ENCODE measurements at regions of chr5 and their contacts with region 1.

Region 1: DNA sequence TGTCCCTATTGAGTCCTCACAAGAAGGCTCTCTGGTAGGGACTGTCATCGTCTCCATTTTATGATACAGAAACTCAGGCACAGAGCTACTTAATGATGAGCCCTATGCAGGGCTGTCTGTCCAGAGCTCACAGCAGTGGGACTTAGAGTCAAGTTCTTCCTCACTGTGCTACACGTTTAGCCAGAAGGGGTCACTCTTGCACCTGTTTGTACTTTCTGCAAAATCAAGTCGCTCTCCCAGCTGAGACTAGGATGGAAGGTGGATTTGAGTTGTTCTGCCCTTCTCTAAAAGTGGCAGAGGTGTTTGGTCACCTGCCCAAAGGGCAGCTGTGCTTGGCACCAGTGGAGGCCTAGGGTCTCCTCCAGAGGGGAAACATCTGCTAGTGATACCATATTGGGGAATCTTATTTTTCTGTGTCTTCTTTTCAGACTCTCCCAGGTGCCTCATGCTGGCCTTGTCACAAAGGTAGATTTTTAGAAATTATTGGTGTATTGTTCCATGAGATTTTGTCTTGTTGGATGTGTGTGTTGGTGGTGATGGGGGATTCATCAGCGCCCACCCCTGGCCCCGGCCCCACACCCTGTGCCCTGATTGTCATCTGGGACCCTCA is 104.2 kb downstream of the PPARGC1B start:
- DNase-seq: no peak
- ATAC-seq: peak; percentile 25 to 33

Region 2: GRCh38 chr5:149938791-149939358 is 104.5 kb after region 1 on chr5:
- intact Hi-C with region 1: no loop called
- DNase-seq: no peak
- ATAC-seq: peak in 1 of 2 donors; percentile 18

Region 3: DNA sequence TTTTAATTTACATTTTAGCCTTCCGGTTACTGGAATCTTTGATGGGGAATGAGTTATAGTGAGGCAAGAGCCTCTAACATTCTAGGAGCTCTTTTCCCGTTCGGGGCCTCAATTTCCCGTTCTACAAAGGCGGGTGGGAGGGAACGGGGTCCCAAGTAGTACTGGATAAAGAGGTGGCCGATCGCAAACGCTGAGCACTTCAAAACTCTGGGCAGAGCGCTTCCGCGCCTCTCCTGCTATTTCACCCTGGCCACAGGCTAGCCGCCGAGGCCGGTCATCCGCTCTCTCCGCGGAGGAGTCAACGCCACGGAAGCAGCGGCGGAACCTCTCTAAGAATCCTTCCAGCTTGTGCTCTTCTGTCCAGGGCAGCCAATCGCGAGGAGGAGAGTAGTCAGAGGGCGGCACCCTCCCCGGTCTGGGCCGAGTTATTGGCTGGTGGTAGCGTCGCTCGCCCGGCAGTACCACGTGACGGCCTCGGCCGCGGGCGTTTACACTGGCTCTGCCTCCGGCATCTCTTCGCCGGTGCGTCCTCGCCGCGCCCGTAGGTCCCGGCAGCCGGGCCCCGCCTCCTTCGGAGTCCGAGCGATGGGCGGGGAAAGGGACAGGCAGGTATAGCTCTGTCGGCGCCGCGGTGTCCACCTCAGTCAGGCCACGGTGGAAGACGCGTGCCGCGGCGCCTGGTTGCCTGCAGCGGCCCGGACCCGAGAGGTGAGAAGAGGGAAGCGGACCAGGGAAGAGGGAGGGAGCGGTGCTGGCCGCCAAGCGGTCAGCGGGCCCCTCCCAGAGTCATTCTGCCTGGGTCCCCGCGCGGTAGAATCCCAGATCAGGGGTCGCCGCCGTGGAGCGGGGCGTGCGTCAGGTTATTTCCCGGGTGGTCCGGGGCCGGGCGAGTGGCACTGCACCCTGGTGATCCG is 126.2 kb after region 1 on chr5 and contains the start of gene SLC26A2:
- intact Hi-C with region 1: loop called in 1 of 2 experiments (anchors 5 kb)
- DNase-seq: peak; percentile 98
- ATAC-seq: peak; percentile 100
- total RNA-seq, gene SLC26A2: 6.3 to 12.6 TPM

Region 4: GRCh38 chr5:149990518-149991376 is 156.4 kb after region 1 on chr5:
- intact Hi-C with region 1: loop called in 1 of 2 experiments (anchors 2 kb)
- DNase-seq: peak; percentile 77
- ATAC-seq: peak; percentile 82 to 85

Region 5: DNA sequence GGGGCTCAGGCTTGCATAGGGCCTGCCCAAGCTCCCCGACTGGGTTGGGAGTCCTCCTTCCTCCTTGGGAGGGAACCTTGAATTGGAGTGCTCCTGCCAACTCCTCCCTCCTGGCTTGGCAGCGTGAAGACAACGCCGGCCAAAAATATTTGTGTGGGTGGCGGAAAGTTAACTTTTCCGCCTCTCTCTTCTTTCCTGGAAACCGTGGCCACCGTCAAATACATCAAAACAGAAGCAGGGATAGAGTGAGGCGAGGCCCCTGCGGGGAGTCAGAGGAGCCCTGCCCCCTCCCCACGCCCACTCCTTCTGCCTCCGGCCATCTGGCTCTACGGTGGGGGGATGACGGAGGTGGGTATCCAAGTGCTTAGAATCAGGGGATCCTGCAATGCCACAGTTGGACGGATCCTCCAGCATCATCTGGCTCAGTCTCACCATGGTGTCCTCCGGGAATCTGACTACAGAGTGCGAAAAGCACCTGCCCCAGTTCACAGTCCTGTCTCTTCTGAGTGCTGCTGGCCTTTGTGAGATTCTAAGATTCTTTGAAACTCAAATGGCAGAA is 780.9 kb after region 1 on chr5:
- intact Hi-C with region 1: no loop called
- DNase-seq: peak; percentile 86
- ATAC-seq: peak; percentile 32 to 48

Measured in left cardiac atrium (tissue), 4 donors.